Calu3 (cell line): ENCODE measurements at regions of chr10 and their contacts with region 1.

Region 1: GRCh38 chr10:5434017-5434753 is 21.8 kb downstream of the NET1 start:
- DNase-seq: peak; percentile 41
- H3K4me3 Mint-ChIP-seq: no peak overlapping the region
- H3K27ac Mint-ChIP-seq: peak overlapping the region; percentile 22
- H3K4me1 Mint-ChIP-seq: peaks cover 27% of the 10 kb centered on the region
- H3K27me3 Mint-ChIP-seq: no peaks in the 10 kb centered on the region
- CTCF ChIP-seq: no peak

Region 2: GRCh38 chr10:4813023-4813422 is 621.2 kb before region 1 on chr10:
- CTCF ChIA-PET with region 1: interaction called, 12 read pairs
- intact Hi-C with region 1: loop called (anchors 2 kb)
- DNase-seq: peak; percentile 21
- H3K4me3 Mint-ChIP-seq: no peak overlapping the region
- H3K27ac Mint-ChIP-seq: no peak overlapping the region
- H3K4me1 Mint-ChIP-seq: peaks cover 34% of the 10 kb centered on the region
- H3K27me3 Mint-ChIP-seq: no peaks in the 10 kb centered on the region
- CTCF ChIP-seq: no peak

Region 3: DNA sequence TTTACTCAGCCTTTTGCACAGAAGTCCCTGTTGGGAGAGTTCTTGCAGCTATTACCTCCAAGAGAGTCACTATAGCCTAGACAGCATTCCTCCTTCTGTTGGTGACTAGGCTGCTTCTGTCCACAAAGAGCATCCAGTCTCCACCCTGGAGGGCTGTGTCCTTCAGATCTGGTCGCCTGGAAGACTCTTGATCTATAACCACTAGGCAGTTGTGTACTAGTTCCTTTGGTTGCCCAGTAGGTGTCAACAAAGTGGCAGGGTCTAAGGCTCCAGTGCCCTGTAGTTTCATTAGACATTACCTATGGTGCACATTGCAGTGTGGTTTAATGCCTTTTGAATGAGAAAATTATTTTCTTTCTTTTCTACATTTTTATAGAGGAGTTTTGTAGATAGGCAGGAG is 419.2 kb before region 1 on chr10:
- CTCF ChIA-PET with region 1: no interaction called
- intact Hi-C with region 1: loop called (anchors 5 kb)
- DNase-seq: peak; percentile 35
- H3K4me3 Mint-ChIP-seq: no peak overlapping the region
- H3K27ac Mint-ChIP-seq: no peak overlapping the region
- H3K4me1 Mint-ChIP-seq: peaks cover 55% of the 10 kb centered on the region
- H3K27me3 Mint-ChIP-seq: no peaks in the 10 kb centered on the region
- CTCF ChIP-seq: no peak